CD8-positive, alpha-beta T cell (primary cell): ENCODE measurements at regions of chr11 and their contacts with region 1.

Region 1: GRCh38 chr11:117226388-117227385 is 5.2 kb downstream of the PCSK7 start:
- DNase-seq: peak in 7 of 9 experiments; percentile 26 to 86 (median 51)
- ATAC-seq: peak; percentile 71
- H3K4me3 ChIP-seq: no peak overlapping the region
- H3K4me3 Mint-ChIP-seq: no peak overlapping the region
- H3K27ac ChIP-seq: no peak overlapping the region
- H3K27ac Mint-ChIP-seq: peak overlapping the region; percentile 52
- H3K4me1 ChIP-seq: peaks cover 28% of the 10 kb centered on the region
- H3K4me1 Mint-ChIP-seq: peaks cover 38% of the 10 kb centered on the region
- H3K27me3 ChIP-seq: no peaks in the 10 kb centered on the region
- H3K27me3 Mint-ChIP-seq: no peaks in the 10 kb centered on the region
- CTCF ChIP-seq: peak; percentile 71

Region 2: GRCh38 chr11:116732271-116733042 is 494.2 kb before region 1 on chr11:
- CTCF ChIA-PET with region 1: interaction called, 3 read pairs
- POLR2A ChIA-PET with region 1: no interaction called
- intact Hi-C with region 1: loop called (anchors 1 to 5 kb)
- DNase-seq: peak; percentile 22 to 71 (median 55)
- ATAC-seq: peak; percentile 93
- H3K4me3 ChIP-seq: no peak overlapping the region
- H3K4me3 Mint-ChIP-seq: no peak overlapping the region
- H3K27ac ChIP-seq: no peak overlapping the region
- H3K27ac Mint-ChIP-seq: no peak overlapping the region
- H3K4me1 ChIP-seq: no peaks in the 10 kb centered on the region
- H3K4me1 Mint-ChIP-seq: peaks cover 10% of the 10 kb centered on the region
- H3K27me3 ChIP-seq: no peaks in the 10 kb centered on the region
- H3K27me3 Mint-ChIP-seq: peaks cover 3% of the 10 kb centered on the region
- CTCF ChIP-seq: peak; percentile 79

Region 3: DNA sequence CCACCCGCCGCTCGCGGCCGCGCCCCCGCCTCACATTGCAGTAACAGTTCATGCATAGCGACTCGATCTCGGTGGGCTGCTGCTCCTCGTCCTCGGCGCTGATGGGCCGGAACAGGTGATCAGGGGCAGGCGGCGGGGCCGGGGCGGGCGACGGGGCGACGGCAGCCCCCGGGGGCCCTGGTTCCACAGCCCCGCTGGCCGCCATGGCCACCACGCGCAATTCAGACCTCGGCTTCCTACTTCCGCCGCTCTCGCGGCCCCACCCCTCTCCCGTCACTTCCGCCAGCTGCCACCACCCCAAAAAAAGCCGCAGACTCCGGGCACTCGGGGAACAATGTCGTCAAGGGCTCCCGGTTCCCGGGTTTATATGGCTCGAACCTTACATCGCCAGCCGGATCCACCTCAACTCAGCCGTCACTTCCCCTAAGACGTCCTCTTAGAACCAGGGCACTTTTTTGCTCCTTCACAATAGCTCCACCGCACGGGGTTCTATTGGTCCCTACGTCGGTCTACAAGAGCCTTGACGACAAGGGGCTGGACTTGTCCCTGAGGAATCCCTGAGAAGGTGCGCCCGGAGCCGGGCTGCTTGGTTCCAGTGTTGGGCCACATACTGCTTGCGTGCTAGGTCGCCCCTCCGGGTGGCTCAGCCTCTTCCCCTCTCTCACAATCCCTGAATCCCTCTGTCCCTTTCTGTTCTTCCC is 438.8 kb before region 1 on chr11 and contains the start of gene ZPR1:
- CTCF ChIA-PET with region 1: interaction called, 16 read pairs
- POLR2A ChIA-PET with region 1: interaction called, 3 read pairs
- intact Hi-C with region 1: loop called (anchors 1 to 2 kb)
- DNase-seq: peak; percentile 69 to 91 (median 87)
- ATAC-seq: peak; percentile 80
- H3K4me3 ChIP-seq: peak within 1 kb of the TSS; percentile 60 to 94
- H3K4me3 Mint-ChIP-seq: peak within 1 kb of the TSS; percentile 95
- H3K27ac ChIP-seq: peak within 1 kb of the TSS; percentile 80 to 95
- H3K27ac Mint-ChIP-seq: peak within 1 kb of the TSS; percentile 91
- H3K4me1 ChIP-seq: peaks cover 29% of the 10 kb centered on the region
- H3K4me1 Mint-ChIP-seq: peaks cover 54% of the 10 kb centered on the region
- H3K27me3 ChIP-seq: no peaks in the 10 kb centered on the region
- H3K27me3 Mint-ChIP-seq: no peaks in the 10 kb centered on the region
- CTCF ChIP-seq: no peak
- total RNA-seq, gene ZPR1: 132 to 134 TPM

Region 4: DNA sequence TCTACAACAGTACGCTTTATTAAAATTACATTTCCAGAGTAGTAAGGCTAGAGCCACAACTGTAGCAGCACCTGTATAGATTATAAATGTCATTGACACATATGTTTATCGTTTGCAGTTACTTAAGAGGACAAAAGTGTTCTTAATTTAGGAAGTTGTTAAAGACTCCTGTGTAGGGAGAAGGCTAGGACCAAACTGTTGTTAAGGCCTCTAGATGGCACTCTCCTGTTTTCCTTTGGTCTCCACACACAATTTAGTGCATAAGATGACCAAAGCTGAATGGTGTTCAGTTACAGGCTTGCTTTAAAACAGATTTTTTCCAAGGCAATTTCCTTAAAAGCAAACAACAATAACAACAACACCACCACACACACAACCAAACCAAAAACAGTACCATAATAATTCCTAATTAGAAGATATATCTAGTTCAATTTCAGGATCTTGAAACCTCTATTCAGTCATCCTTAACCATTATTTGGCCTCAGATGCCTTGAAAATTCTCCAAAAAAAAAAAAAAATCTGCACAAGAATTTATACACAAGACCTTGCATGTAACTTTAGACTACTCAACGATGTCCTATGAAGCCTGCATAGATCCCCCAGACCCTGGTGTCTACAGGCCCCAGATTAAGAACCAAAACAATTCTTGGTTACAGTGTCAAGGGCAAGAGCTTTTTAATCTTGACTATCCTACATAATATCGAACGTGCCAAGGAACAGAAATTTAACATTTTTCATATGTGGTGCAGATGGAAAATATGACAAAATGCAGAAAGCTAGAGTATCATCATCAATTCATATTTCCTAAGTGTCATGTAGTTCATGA is 346.7 kb before region 1 on chr11:
- CTCF ChIA-PET with region 1: interaction called, 3 read pairs
- POLR2A ChIA-PET with region 1: no interaction called
- intact Hi-C with region 1: loop called (anchors 1 kb)
- DNase-seq: peak in 4 of 9 experiments; percentile 15 to 76 (median 44)
- ATAC-seq: peak; percentile 75
- H3K4me3 ChIP-seq: no peak overlapping the region
- H3K4me3 Mint-ChIP-seq: no peak overlapping the region
- H3K27ac ChIP-seq: no peak overlapping the region
- H3K27ac Mint-ChIP-seq: no peak overlapping the region
- H3K4me1 ChIP-seq: no peaks in the 10 kb centered on the region
- H3K4me1 Mint-ChIP-seq: peaks cover 5% of the 10 kb centered on the region
- H3K27me3 ChIP-seq: no peaks in the 10 kb centered on the region
- H3K27me3 Mint-ChIP-seq: no peaks in the 10 kb centered on the region
- CTCF ChIP-seq: peak; percentile 71

Region 5: GRCh38 chr11:117178210-117179034 is 48.3 kb before region 1 on chr11 and contains the start of gene SIDT2:
- CTCF ChIA-PET with region 1: interaction called, 61 read pairs
- POLR2A ChIA-PET with region 1: interaction called, 22 read pairs
- intact Hi-C with region 1: loop called (anchors 1 kb)
- DNase-seq: peak; percentile 78 to 94 (median 90)
- ATAC-seq: peak; percentile 92
- H3K4me3 ChIP-seq: peak within 1 kb of the TSS; percentile 57 to 76
- H3K4me3 Mint-ChIP-seq: peak within 1 kb of the TSS; percentile 96
- H3K27ac ChIP-seq: peak within 1 kb of the TSS; percentile 50 to 80
- H3K27ac Mint-ChIP-seq: peak within 1 kb of the TSS; percentile 97
- H3K4me1 ChIP-seq: peaks cover 24% of the 10 kb centered on the region
- H3K4me1 Mint-ChIP-seq: peaks cover 29% of the 10 kb centered on the region
- H3K27me3 ChIP-seq: no peaks in the 10 kb centered on the region
- H3K27me3 Mint-ChIP-seq: no peaks in the 10 kb centered on the region
- CTCF ChIP-seq: no peak
- total RNA-seq, gene SIDT2: 133 to 134 TPM

Region 6: GRCh38 chr11:117200813-117201657 is 25.7 kb before region 1 on chr11:
- CTCF ChIA-PET with region 1: interaction called, 8 read pairs
- POLR2A ChIA-PET with region 1: interaction called, 4 read pairs
- intact Hi-C with region 1: loop called in 1 of 2 experiments (anchors 1 kb)
- DNase-seq: no peak
- ATAC-seq: no peak
- H3K4me3 ChIP-seq: no peak overlapping the region
- H3K4me3 Mint-ChIP-seq: no peak overlapping the region
- H3K27ac ChIP-seq: no peak overlapping the region
- H3K27ac Mint-ChIP-seq: no peak overlapping the region
- H3K4me1 ChIP-seq: no peaks in the 10 kb centered on the region
- H3K4me1 Mint-ChIP-seq: no peaks in the 10 kb centered on the region
- H3K27me3 ChIP-seq: no peaks in the 10 kb centered on the region
- H3K27me3 Mint-ChIP-seq: no peaks in the 10 kb centered on the region
- CTCF ChIP-seq: no peak

Region 7: GRCh38 chr11:117210620-117211019 is 16.1 kb before region 1 on chr11:
- CTCF ChIA-PET with region 1: interaction called, 20 read pairs
- POLR2A ChIA-PET with region 1: interaction called, 4 read pairs
- intact Hi-C with region 1: no loop called
- DNase-seq: no peak
- ATAC-seq: no peak
- H3K4me3 ChIP-seq: no peak overlapping the region
- H3K4me3 Mint-ChIP-seq: no peak overlapping the region
- H3K27ac ChIP-seq: no peak overlapping the region
- H3K27ac Mint-ChIP-seq: no peak overlapping the region
- H3K4me1 ChIP-seq: no peaks in the 10 kb centered on the region
- H3K4me1 Mint-ChIP-seq: peaks cover 4% of the 10 kb centered on the region
- H3K27me3 ChIP-seq: no peaks in the 10 kb centered on the region
- H3K27me3 Mint-ChIP-seq: no peaks in the 10 kb centered on the region
- CTCF ChIP-seq: no peak

Region 8: GRCh38 chr11:117319214-117319840 is 92.6 kb after region 1 on chr11:
- CTCF ChIA-PET with region 1: no interaction called
- POLR2A ChIA-PET with region 1: no interaction called
- intact Hi-C with region 1: no loop called
- DNase-seq: no peak
- ATAC-seq: no peak
- H3K4me3 ChIP-seq: no peak overlapping the region
- H3K4me3 Mint-ChIP-seq: no peak overlapping the region
- H3K27ac ChIP-seq: no peak overlapping the region
- H3K27ac Mint-ChIP-seq: no peak overlapping the region
- H3K4me1 ChIP-seq: peaks cover 12% of the 10 kb centered on the region
- H3K4me1 Mint-ChIP-seq: peaks cover 11% of the 10 kb centered on the region
- H3K27me3 ChIP-seq: peaks cover 16 to 21% of the 10 kb centered on the region in 2 experiments
- H3K27me3 Mint-ChIP-seq: peaks cover 22% of the 10 kb centered on the region
- CTCF ChIP-seq: no peak

Region 9: GRCh38 chr11:117950301-117950700 is 723.6 kb after region 1 on chr11:
- CTCF ChIA-PET with region 1: no interaction called
- POLR2A ChIA-PET with region 1: no interaction called
- intact Hi-C with region 1: no loop called
- DNase-seq: peak; percentile 34 to 92 (median 72)
- ATAC-seq: peak; percentile 52
- H3K4me3 ChIP-seq: peak overlapping the region; percentile 19 to 46
- H3K4me3 Mint-ChIP-seq: peak overlapping the region; percentile 71
- H3K27ac ChIP-seq: peak overlapping the region; percentile 39 to 56
- H3K27ac Mint-ChIP-seq: peak overlapping the region; percentile 95
- H3K4me1 ChIP-seq: peaks cover 83% of the 10 kb centered on the region
- H3K4me1 Mint-ChIP-seq: peaks cover 92% of the 10 kb centered on the region
- H3K27me3 ChIP-seq: no peaks in the 10 kb centered on the region
- H3K27me3 Mint-ChIP-seq: no peaks in the 10 kb centered on the region
- CTCF ChIP-seq: peak; percentile 42